ENCODE measurements at regions of chr10 and their contacts with region 1.

Region 1: GRCh38 chr10:110746254-110746826 is 102.2 kb downstream of the RBM20 start:
- DNase-seq: peak; percentile 81
- H3K4me3 ChIP-seq: no peak overlapping the region
- H3K27ac ChIP-seq: no peak overlapping the region
- H3K4me1 ChIP-seq: peaks cover 23% of the 10 kb centered on the region
- H3K27me3 ChIP-seq: peaks cover 2 to 5% of the 10 kb centered on the region in 2 experiments
- CTCF ChIP-seq: peak; percentile 63 to 71
- POLR2A ChIP-seq: no peak

Region 2: DNA sequence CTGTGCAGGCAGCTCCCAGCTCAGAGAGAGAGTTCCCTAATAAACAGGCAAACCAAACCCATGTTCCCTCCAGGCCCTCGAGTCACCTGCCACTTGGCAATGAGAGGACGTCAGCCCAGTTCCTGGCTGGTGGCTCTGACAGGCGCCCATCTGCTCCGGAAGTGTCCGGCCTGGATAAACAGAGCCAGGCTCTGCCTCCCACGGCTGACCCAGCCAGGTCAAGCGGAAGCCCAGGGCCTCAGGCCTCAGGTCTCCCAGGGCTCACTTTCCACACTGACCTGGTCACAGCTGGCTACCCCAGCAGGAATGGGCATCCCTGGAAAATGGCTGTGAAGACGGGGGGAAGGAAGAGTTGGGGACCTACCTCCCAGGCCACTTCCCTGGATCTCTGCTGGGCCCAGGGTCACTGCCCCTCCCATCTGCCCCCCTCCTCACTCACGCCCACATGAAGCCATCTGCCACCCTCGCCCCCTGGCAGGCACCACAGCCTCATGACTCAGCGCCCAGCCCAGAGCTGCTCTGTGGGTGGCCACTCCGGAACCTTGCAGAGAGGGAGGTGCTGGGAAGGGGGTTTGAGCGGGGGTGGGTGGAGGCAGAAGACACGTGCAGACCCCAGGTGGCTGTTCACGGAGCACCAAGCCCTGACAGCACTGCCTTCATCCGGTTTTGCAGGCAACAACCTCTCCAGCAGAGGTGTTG is 286.1 kb before region 1 on chr10:
- CTCF ChIA-PET with region 1: no interaction called
- POLR2A ChIA-PET with region 1: no interaction called
- dilution Hi-C with region 1: no loop called
- intact Hi-C with region 1: no loop called
- DNase-seq: peak; percentile 55
- H3K4me3 ChIP-seq: no peak overlapping the region
- H3K27ac ChIP-seq: peak overlapping the region; percentile 66
- H3K4me1 ChIP-seq: peaks cover 29% of the 10 kb centered on the region
- H3K27me3 ChIP-seq: no peaks in the 10 kb centered on the region
- CTCF ChIP-seq: no peak
- POLR2A ChIP-seq: no peak

Region 3: GRCh38 chr10:110610308-110610774 is 136.0 kb before region 1 on chr10:
- CTCF ChIA-PET with region 1: interaction called, 3 read pairs
- POLR2A ChIA-PET with region 1: no interaction called
- dilution Hi-C with region 1: no loop called
- intact Hi-C with region 1: loop called (anchors 2 kb)
- DNase-seq: peak; percentile 58
- H3K4me3 ChIP-seq: no peak overlapping the region
- H3K27ac ChIP-seq: no peak overlapping the region
- H3K4me1 ChIP-seq: no peaks in the 10 kb centered on the region
- H3K27me3 ChIP-seq: peaks cover 6 to 10% of the 10 kb centered on the region in 2 experiments
- CTCF ChIP-seq: peak; percentile 68 to 71
- POLR2A ChIP-seq: no peak

Region 4: GRCh38 chr10:110864662-110865140 is 118.4 kb after region 1 on chr10:
- CTCF ChIA-PET with region 1: interaction called, 10 read pairs
- POLR2A ChIA-PET with region 1: no interaction called
- dilution Hi-C with region 1: no loop called
- intact Hi-C with region 1: no loop called
- DNase-seq: no peak
- H3K4me3 ChIP-seq: no peak overlapping the region
- H3K27ac ChIP-seq: no peak overlapping the region
- H3K4me1 ChIP-seq: no peaks in the 10 kb centered on the region
- H3K27me3 ChIP-seq: peaks cover 8 to 13% of the 10 kb centered on the region in 2 experiments
- CTCF ChIP-seq: no peak
- POLR2A ChIP-seq: no peak

Region 5: GRCh38 chr10:110893559-110894179 is 147.3 kb after region 1 on chr10:
- CTCF ChIA-PET with region 1: interaction called, 113 read pairs
- POLR2A ChIA-PET with region 1: no interaction called
- dilution Hi-C with region 1: no loop called
- intact Hi-C with region 1: loop called (anchors 1 kb)
- DNase-seq: peak; percentile 62
- H3K4me3 ChIP-seq: no peak overlapping the region
- H3K27ac ChIP-seq: no peak overlapping the region
- H3K4me1 ChIP-seq: no peaks in the 10 kb centered on the region
- H3K27me3 ChIP-seq: no peaks in the 10 kb centered on the region
- CTCF ChIP-seq: peak; percentile 17 to 29
- POLR2A ChIP-seq: no peak

Region 6: GRCh38 chr10:111598436-111599059 is 852.2 kb after region 1 on chr10:
- CTCF ChIA-PET with region 1: interaction called, 15 read pairs
- POLR2A ChIA-PET with region 1: no interaction called
- dilution Hi-C with region 1: no loop called
- intact Hi-C with region 1: no loop called
- DNase-seq: peak; percentile 28
- H3K4me3 ChIP-seq: no peak overlapping the region
- H3K27ac ChIP-seq: no peak overlapping the region
- H3K4me1 ChIP-seq: no peaks in the 10 kb centered on the region
- H3K27me3 ChIP-seq: no peaks in the 10 kb centered on the region
- CTCF ChIP-seq: peak; percentile 57 to 70
- POLR2A ChIP-seq: no peak

Region 7: GRCh38 chr10:112314822-112315474 is 1568.6 kb after region 1 on chr10:
- CTCF ChIA-PET with region 1: interaction called, 3 read pairs
- POLR2A ChIA-PET with region 1: no interaction called
- dilution Hi-C with region 1: no loop called
- intact Hi-C with region 1: loop called (anchors 1 kb)
- DNase-seq: peak; percentile 68
- H3K4me3 ChIP-seq: no peak overlapping the region
- H3K27ac ChIP-seq: no peak overlapping the region
- H3K4me1 ChIP-seq: peaks cover 20% of the 10 kb centered on the region
- H3K27me3 ChIP-seq: no peaks in the 10 kb centered on the region
- CTCF ChIP-seq: peak; percentile 81 to 88
- POLR2A ChIP-seq: no peak